OCI-LY7 (cell line): ENCODE measurements at regions of chr16 and their contacts with region 1.

Region 1: GRCh38 chr16:70553645-70554044 is 30.0 kb downstream of the SF3B3 start:
- DNase-seq: no peak
- H3K4me3 ChIP-seq: no peak overlapping the region
- H3K27ac ChIP-seq: no peak overlapping the region
- H3K4me1 ChIP-seq: no peaks in the 10 kb centered on the region
- CTCF ChIP-seq: no peak

Region 2: DNA sequence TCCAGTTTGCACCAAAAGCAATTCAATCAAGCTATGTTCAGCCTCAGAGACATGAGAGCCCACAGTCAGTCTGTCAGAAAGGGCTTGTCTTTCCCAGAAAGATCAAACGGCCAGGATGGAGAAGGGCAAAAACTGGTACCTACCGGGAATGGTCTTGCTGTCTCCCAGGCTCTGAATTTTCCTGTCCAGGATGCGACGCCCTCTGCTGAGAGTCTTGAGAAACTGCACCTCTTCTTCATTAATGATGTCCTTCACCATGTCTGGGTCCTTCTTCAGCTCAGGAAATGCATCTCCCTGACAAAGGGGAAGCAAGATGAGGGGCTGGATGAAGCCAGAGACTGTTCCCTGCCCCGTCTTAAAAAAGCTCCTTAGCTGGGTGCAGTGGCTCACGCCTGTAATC is 286.1 kb before region 1 on chr16:
- CTCF ChIA-PET with region 1: no interaction called
- POLR2A ChIA-PET with region 1: no interaction called
- intact Hi-C with region 1: loop called (anchors 10 kb)
- DNase-seq: peak; percentile 44
- H3K4me3 ChIP-seq: no peak overlapping the region
- H3K27ac ChIP-seq: no peak overlapping the region
- H3K4me1 ChIP-seq: no peaks in the 10 kb centered on the region
- CTCF ChIP-seq: peak; percentile 78

Region 3: DNA sequence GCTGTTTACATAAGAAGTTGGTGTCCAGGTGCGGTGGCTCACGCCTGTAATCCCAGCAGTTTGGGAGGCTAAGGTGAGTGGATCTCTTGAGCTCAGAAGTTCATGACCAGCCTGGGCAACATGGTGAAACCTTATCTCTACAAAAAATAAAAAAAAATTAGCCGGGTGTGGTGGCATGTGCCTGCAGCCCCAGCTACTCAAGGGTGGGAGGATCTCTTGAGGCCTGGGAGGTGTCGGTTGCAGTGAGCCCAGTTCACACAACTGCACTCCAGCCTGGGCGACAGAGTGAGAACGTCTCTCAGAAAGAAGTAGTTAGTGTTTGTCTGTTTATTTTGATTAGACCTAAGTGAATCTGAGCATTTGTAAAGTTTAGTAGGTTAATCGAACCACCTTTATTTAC is 194.1 kb before region 1 on chr16:
- CTCF ChIA-PET with region 1: no interaction called
- POLR2A ChIA-PET with region 1: no interaction called
- intact Hi-C with region 1: no loop called
- DNase-seq: no peak
- H3K4me3 ChIP-seq: no peak overlapping the region
- H3K27ac ChIP-seq: no peak overlapping the region
- H3K4me1 ChIP-seq: no peaks in the 10 kb centered on the region
- CTCF ChIP-seq: no peak

Region 4: DNA sequence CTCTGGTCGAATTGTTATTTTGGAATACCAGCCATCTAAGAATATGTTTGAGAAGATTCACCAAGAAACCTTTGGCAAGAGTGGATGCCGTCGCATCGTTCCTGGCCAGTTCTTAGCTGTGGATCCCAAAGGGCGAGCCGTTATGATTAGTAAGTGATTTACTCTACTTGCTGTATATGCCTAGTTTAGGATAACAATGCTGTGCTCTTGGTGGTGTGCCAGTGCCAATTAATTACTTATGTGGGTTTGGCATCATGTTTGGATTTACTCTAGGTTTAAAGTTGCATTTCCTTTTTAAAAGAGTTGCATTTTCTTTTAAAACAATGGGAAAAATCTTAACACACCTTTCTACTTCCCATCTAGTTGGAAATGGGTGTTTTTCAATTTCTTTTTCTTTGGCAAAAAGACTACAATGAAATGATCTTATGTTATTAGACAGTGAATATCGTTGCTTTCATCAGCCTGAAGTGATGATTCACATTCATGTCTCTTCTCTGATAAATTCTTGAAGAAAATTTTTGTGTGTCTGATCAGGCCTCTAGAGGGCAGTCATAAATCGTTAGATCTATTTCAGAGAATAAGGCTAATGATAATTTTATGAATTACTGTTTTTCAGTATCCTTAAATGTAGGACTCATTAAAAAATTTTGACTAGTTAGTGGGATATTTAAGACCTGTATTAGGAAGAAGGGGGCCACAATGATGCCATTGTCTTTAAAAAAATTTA is 24.4 kb before region 1 on chr16:
- CTCF ChIA-PET with region 1: no interaction called
- POLR2A ChIA-PET with region 1: interaction called, 10 read pairs
- intact Hi-C with region 1: no loop called
- DNase-seq: peak; percentile 54
- H3K4me3 ChIP-seq: peak overlapping the region; percentile 28
- H3K27ac ChIP-seq: no peak overlapping the region
- H3K4me1 ChIP-seq: peaks cover 38% of the 10 kb centered on the region
- CTCF ChIP-seq: peak; percentile 85

Region 5: DNA sequence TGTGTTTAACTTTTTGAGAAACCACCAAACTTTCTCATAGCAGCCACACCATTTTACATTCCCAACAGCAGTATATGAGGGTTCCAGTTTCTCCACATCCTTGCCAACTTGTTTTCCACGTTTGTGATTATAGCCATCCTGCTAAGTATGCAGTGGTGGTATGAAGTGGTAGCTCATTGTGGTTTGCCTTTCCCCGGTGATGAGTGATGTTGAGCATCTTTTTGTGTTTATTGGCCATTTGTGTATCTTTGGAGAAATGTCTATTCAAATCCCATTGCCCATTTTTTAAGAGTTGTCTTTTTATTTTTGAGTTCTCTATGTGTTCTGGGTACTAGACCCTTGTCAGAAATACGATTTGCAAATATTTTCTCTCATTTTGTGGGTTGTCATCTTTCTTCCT is 12.7 kb before region 1 on chr16:
- CTCF ChIA-PET with region 1: interaction called, 3 read pairs
- POLR2A ChIA-PET with region 1: interaction called, 4 read pairs
- intact Hi-C with region 1: loop called (anchors 2 kb)
- DNase-seq: no peak
- H3K4me3 ChIP-seq: no peak overlapping the region
- H3K27ac ChIP-seq: no peak overlapping the region
- H3K4me1 ChIP-seq: no peaks in the 10 kb centered on the region
- CTCF ChIP-seq: no peak